Posterior cingulate gyrus (tissue), 11 donors: ENCODE measurements at regions of chr13 and their contacts with region 1.

Region 1: GRCh38 chr13:75876360-75877050 is 240.4 kb downstream of the LMO7 start:
- DNase-seq: peak; percentile 31 to 92 (median 64)

Region 2: GRCh38 chr13:76019421-76020044 is 143.0 kb after region 1 on chr13:
- intact Hi-C with region 1: loop called (anchors 5 kb)
- DNase-seq: peak; percentile 28 to 96 (median 70)

Region 3: GRCh38 chr13:76473552-76474134 is 597.1 kb after region 1 on chr13:
- intact Hi-C with region 1: loop called (anchors 1 kb)
- DNase-seq: peak in 9 of 10 donors; percentile 57 to 93 (median 76)

Region 4: DNA sequence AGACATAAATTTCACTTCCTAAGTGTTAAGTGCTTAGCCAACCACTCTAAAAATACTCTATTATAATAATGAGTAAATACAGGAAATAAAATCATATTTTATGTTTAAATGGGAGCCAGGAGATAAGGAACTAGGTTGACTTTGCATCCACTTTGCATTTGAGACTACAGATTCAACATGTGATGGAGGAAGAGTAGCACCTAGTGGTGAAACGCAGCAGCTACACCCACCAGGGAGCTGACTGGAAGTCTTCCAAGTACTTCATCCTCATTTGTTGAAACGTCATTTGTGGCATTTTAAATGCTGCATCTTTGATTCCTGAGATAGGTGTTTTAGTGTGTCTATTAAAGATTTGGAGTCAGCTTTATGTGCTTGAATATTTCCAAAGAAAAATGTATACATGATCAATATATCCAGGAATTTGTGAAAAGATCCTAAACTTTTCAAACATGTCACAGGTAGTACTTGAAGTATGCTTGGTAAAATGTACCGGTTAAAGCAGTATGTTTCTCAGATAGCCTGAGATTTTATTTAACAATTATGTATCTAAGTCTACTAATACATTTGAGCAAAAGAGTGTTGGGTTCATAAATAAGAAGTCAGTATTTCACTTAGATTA is 1027.1 kb after region 1 on chr13:
- intact Hi-C with region 1: loop called (anchors 2 kb)
- DNase-seq: peak in 9 of 10 donors; percentile 19 to 93 (median 64)